Dorsolateral prefrontal cortex (tissue), 120 donors: ENCODE measurements at regions of chr6 and their contacts with region 1.

Region 1: GRCh38 chr6:50816115-50816675 is 2.5 kb upstream of the TFAP2B start:
- DNase-seq: peak in 8 of 10 donors; percentile 31 to 76 (median 68)
- H3K4me3 ChIP-seq: peak overlapping the region in 51 of 59 donors; percentile 7 to 59 (median 40)
- H3K27ac ChIP-seq: no peak overlapping the region
- H3K27me3 ChIP-seq: peaks cover 9 to 99% (median 83%) of the 10 kb centered on the region in 45 donors
- CTCF ChIP-seq: peak; percentile 67 to 97 (median 90)

Region 2: GRCh38 chr6:50862172-50862571 is 46.0 kb after region 1 on chr6:
- intact Hi-C with region 1: no loop called
- DNase-seq: no peak
- H3K4me3 ChIP-seq: no peak overlapping the region
- H3K27ac ChIP-seq: no peak overlapping the region
- H3K27me3 ChIP-seq: peaks cover 0 to 24% (median 3%) of the 10 kb centered on the region in 45 donors
- CTCF ChIP-seq: no peak

Region 3: DNA sequence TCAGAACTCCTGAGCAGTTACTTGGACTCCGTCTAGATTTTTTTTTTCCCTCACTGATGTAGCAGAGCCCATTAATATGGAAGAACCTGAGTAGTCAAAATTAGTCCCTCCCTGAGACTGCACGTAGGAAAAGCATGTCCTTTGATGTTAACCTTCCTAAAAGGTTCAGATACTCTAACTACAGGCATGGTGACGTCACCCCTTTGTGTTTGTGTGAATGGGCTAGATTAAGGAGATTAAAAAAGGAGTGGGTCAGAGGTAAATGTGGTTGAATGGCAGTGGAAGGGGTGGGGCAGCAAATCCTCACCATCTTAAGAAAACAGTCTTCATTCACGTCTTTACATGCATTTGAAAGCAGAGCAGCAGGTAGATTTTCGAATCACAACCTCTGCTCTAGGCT is 523.5 kb after region 1 on chr6:
- intact Hi-C with region 1: loop called in 1 of 2 experiments (anchors 10 kb)
- DNase-seq: no peak
- H3K4me3 ChIP-seq: no peak overlapping the region
- H3K27ac ChIP-seq: no peak overlapping the region
- H3K27me3 ChIP-seq: peaks cover 0 to 5% (median 0%) of the 10 kb centered on the region in 45 donors
- CTCF ChIP-seq: no peak

Region 4: DNA sequence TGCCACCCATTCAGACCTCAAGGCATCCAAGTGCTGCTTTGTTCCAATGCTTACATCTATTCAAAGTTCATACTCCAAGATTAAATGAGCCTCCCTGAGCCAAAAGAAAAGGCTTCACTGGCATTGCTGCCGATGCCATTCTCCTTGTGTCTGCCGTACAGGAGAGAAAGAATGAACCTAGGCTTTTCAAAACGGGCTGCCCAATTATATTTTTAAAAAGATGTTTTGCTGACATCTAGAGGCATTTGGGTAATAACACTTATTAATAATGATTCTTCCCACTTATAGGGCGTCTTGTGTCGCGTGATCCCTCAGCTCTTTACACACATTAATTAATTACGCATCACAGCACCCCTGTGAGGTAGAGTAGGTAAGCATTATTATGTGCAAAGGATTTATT is 725.7 kb after region 1 on chr6:
- intact Hi-C with region 1: loop called (anchors 2 to 10 kb)
- DNase-seq: no peak
- H3K4me3 ChIP-seq: no peak overlapping the region
- H3K27ac ChIP-seq: no peak overlapping the region
- H3K27me3 ChIP-seq: peaks cover 0 to 58% (median 18%) of the 10 kb centered on the region in 45 donors
- CTCF ChIP-seq: peak in 44 of 56 donors; percentile 7 to 67 (median 42)

Region 5: GRCh38 chr6:51844336-51844735 is 1028.1 kb after region 1 on chr6:
- intact Hi-C with region 1: loop called in 1 of 2 experiments (anchors 5 kb)
- DNase-seq: no peak
- H3K4me3 ChIP-seq: no peak overlapping the region
- H3K27ac ChIP-seq: no peak overlapping the region
- H3K27me3 ChIP-seq: peaks cover 0 to 4% (median 0%) of the 10 kb centered on the region in 45 donors
- CTCF ChIP-seq: peak in 16 of 56 donors; percentile 10 to 32 (median 18)

Region 6: DNA sequence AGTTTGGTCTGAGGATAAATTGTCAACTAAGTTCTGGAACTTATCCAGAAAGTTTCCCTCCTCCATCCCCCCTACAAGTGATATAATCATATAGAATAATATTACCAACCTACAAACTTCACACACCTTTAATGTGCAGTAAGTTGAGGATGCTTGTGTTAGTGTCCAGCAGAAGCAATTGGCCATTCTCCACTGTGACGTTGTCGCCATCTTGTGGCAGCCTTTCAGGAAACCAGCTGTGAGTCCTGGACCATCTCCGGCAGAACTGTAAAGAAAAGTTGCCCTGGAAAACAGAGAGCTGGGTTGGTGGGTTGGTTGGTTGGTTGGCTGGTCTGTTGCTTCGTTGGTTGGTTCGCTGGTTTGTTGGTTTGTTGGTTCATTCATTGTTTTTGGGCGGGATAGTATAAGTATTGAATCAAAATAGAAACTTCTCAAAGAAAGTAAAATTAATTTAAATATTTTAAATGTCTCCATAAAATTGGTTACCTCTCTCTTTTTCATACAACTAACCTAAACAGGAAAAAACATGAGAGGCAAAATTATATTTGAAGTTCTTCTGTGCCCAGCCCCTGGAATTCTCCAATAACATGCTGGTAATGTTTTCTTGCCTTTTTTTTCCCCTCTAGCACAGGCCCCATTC is 1143.7 kb after region 1 on chr6:
- intact Hi-C with region 1: loop called (anchors 5 kb)
- DNase-seq: peak; percentile 16 to 80 (median 64)
- H3K4me3 ChIP-seq: no peak overlapping the region
- H3K27ac ChIP-seq: peak overlapping the region in 1 of 59 donors; percentile 42
- H3K27me3 ChIP-seq: peaks cover 0 to 17% (median 0%) of the 10 kb centered on the region in 45 donors
- CTCF ChIP-seq: peak in 55 of 56 donors; percentile 33 to 83 (median 61)

Region 7: GRCh38 chr6:52020945-52021570 is 1204.9 kb after region 1 on chr6:
- intact Hi-C with region 1: loop called in 1 of 2 experiments (anchors 10 kb)
- DNase-seq: no peak
- H3K4me3 ChIP-seq: no peak overlapping the region
- H3K27ac ChIP-seq: no peak overlapping the region
- H3K27me3 ChIP-seq: peaks cover 0 to 28% (median 4%) of the 10 kb centered on the region in 45 donors
- CTCF ChIP-seq: peak; percentile 68 to 96 (median 85)